ENCODE measurements at regions of chr7 and their contacts with region 1.

Region 1: GRCh38 chr7:32846701-32847100 is 44.9 kb downstream of the KBTBD2 start:
- DNase-seq: peak; percentile 71
- CTCF ChIP-seq: peak; percentile 94

Region 2: GRCh38 chr7:32631590-32632449 is 214.9 kb before region 1 on chr7:
- CTCF ChIA-PET with region 1: no interaction called
- POLR2A ChIA-PET with region 1: no interaction called
- DNase-seq: no peak
- CTCF ChIP-seq: no peak

Region 3: GRCh38 chr7:32858648-32859047 is 11.9 kb after region 1 on chr7:
- CTCF ChIA-PET with region 1: interaction called, 26 read pairs
- POLR2A ChIA-PET with region 1: no interaction called
- DNase-seq: no peak
- CTCF ChIP-seq: no peak

Region 4: DNA sequence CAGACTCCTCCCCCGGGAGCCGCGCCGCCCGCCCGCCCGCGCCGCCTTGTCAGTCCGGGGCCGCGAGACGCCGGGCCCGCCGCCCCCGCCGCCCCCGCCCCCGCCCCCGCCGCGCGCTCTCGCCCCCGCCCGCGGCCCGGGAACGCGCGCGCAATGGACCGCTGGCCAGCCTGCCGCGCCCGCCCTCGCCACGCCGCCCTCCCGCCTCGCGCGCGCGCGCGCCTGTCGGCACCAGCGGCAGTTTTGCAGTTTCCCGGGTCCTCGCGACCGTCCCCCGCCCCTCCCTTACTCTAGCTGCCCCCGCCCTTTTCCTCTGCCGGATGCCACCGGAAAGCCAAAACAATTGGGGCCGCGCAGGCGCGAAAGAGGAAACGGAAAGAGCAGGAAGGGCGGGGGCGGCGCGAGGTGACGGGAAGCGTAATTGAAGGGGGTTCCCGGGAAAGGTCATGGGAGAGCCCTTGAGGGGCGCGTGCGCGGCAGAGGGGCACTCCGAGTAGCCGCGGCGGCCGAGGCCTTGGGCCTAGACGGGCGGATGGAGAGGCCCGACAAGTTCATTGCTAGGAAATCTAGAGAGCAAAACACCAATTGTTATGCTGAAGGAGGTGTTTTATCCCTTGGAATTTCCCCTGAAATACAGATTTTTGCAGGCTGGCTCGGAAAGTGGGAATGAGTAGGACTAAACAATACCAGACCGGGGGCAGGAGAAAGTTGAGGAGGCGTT is 45.3 kb after region 1 on chr7:
- CTCF ChIA-PET with region 1: interaction called, 24 read pairs
- POLR2A ChIA-PET with region 1: interaction called, 4 read pairs
- DNase-seq: peak; percentile 91
- CTCF ChIP-seq: no peak

Region 5: DNA sequence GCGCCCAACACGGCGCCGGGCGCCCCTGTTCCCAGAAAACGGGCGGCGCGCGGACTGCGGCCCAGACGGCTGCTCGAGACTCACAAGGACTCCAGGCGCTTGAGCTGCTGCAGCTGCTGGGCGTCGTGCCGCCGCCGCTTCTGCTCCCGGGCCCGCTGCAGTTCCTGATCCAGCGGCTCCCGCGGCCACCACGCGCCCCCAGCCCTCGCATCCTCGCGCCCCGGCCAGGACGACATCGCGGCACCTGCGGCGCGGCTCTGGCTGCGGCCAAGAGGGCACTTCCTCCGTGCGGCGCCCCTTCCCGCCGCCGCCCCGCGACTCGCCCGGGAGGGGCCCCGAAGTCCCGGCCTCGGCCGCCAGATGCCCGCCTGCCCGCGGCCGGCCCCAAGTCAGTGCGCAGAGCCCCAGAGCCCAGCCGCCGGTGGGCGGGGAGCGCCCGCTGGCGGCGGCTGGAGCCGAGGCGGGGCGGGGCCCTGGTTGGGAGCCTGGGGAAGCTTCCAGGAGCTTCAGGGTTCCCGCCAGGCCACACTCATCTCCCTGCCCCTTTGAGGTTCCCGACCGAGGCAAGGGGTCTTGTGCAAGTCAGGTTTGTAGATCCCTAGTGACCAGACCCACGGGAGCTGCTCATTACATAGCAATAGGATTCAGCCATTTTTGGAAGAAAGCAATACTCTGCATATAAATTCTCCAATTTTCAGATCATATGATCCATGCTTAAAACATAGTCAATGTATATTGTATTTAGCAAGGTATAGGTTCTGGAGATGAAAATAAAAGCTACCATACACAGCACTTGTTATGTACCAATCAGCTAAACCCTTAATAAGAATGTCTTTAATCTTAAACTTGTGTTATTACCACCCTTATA is 96.3 kb after region 1 on chr7:
- CTCF ChIA-PET with region 1: interaction called, 21 read pairs
- POLR2A ChIA-PET with region 1: no interaction called
- DNase-seq: peak; percentile 89
- CTCF ChIP-seq: peak; percentile 72

Region 6: GRCh38 chr7:33062782-33063443 is 216.2 kb after region 1 on chr7:
- CTCF ChIA-PET with region 1: interaction called, 19 read pairs
- POLR2A ChIA-PET with region 1: no interaction called
- DNase-seq: peak; percentile 96
- CTCF ChIP-seq: no peak

Measured in GM10248 (cell line).